Tibial artery (tissue), 4 donors: ENCODE measurements at regions of chr13 and their contacts with region 1.

Region 1: GRCh38 chr13:24727731-24728601 is 36.0 kb upstream of the RNF17 start:
- DNase-seq: peak; percentile 70 to 76
- H3K4me3 ChIP-seq: no peak overlapping the region
- H3K27ac ChIP-seq: no peak overlapping the region
- H3K4me1 ChIP-seq: peaks cover 0 to 11% (median 0%) of the 10 kb centered on the region in 4 donors
- H3K27me3 ChIP-seq: peaks cover 0 to 4% of the 10 kb centered on the region in 2 donors
- CTCF ChIP-seq: peak; percentile 68 to 79

Region 2: DNA sequence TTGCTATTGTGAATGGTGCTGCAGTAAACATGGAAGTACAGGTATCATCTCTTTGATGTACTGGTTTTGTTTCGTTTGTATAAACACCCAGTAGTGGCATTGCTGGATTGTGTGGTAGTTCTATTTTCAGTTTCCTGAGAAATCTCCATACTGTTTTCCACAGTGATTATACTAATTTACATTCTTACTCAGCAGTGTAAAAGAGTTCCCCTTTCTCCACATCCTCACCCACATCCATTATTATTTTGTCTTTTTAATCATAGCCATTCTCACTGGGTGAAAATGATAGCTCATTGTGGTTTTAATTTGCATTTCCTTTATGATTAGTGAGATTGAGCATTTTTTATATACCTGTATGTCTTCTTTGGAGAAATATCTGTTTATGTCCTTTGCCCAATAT is 153.1 kb before region 1 on chr13:
- intact Hi-C with region 1: loop called (anchors 5 kb)
- DNase-seq: no peak
- H3K4me3 ChIP-seq: no peak overlapping the region
- H3K27ac ChIP-seq: no peak overlapping the region
- H3K4me1 ChIP-seq: no peaks in the 10 kb centered on the region
- H3K27me3 ChIP-seq: peaks cover 0 to 3% of the 10 kb centered on the region in 2 donors
- CTCF ChIP-seq: no peak

Region 3: GRCh38 chr13:24683838-24684599 is 43.9 kb before region 1 on chr13:
- intact Hi-C with region 1: loop called (anchors 5 kb)
- DNase-seq: peak in 1 of 2 donors; percentile 54
- H3K4me3 ChIP-seq: no peak overlapping the region
- H3K27ac ChIP-seq: no peak overlapping the region
- H3K4me1 ChIP-seq: peaks cover 0 to 45% (median 30%) of the 10 kb centered on the region in 4 donors
- H3K27me3 ChIP-seq: peaks cover 0 to 20% of the 10 kb centered on the region in 2 donors
- CTCF ChIP-seq: peak; percentile 65 to 82